Activated T-helper 1 cell treated with anti-CD3 and anti-CD28 coated beads, Interleukin-12 subunit alpha, Interleukin-12 subunit beta, Interleukin-2, Interleukin-4 antibody, amounts not matched to agents 30 ng/mL and 10 ng/mL and 1 ng/mL, durations not matched to agents 14 hours and 24 hours and 36 hours (primary cell): ENCODE measurements at regions of chr16 and their contacts with region 1.

Region 1: GRCh38 chr16:2251483-2252240 is at the start of gene ECI1:
- DNase-seq: peak; percentile 80
- H3K4me3 Mint-ChIP-seq: peak within 1 kb of the TSS; percentile 91
- H3K27ac Mint-ChIP-seq: peak within 1 kb of the TSS; percentile 94
- H3K4me1 Mint-ChIP-seq: peaks cover 10% of the 10 kb centered on the region
- H3K27me3 Mint-ChIP-seq: no peaks in the 10 kb centered on the region
- total RNA-seq, gene ECI1: 35.5 and 36.5 TPM in 2 replicates

Region 2: DNA sequence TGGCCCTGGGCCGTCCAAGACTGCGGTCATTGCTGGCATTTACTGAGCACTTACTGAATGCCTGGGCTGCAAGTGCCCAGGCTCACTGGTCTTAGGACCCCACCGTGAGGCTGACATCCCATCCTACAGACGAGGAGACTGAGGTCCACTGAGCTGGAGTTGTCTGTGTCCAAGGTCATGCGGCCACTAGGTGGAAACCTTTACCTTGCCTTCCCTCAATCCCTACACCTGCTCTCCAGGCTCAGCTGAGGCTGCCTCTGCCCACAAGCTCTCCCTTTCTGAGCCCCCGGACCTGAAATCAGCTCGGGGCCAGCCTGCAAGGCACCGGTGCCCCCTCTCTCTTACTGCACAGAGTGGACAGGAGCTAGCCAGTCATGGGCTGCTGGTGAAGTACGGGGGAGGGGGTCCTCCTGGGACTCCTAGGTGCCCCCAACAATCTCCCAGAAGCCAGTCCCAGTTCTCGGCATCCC is 56.8 kb before region 1 on chr16:
- intact Hi-C with region 1: loop called (anchors 2 kb)
- DNase-seq: peak; percentile 25
- H3K4me3 Mint-ChIP-seq: peak overlapping the region; percentile 15
- H3K27ac Mint-ChIP-seq: no peak overlapping the region
- H3K4me1 Mint-ChIP-seq: no peaks in the 10 kb centered on the region
- H3K27me3 Mint-ChIP-seq: peaks cover 32% of the 10 kb centered on the region

Region 3: GRCh38 chr16:2205104-2205966 is 46.3 kb before region 1 on chr16 and contains the start of gene MLST8:
- intact Hi-C with region 1: loop called (anchors 1 kb)
- DNase-seq: peak; percentile 90
- H3K4me3 Mint-ChIP-seq: peak within 1 kb of the TSS; percentile 86
- H3K27ac Mint-ChIP-seq: peak within 1 kb of the TSS; percentile 68
- H3K4me1 Mint-ChIP-seq: peaks cover 22% of the 10 kb centered on the region
- H3K27me3 Mint-ChIP-seq: peaks cover 13% of the 10 kb centered on the region
- total RNA-seq, gene MLST8: 57.0 and 61.9 TPM in 2 replicates

Region 4: DNA sequence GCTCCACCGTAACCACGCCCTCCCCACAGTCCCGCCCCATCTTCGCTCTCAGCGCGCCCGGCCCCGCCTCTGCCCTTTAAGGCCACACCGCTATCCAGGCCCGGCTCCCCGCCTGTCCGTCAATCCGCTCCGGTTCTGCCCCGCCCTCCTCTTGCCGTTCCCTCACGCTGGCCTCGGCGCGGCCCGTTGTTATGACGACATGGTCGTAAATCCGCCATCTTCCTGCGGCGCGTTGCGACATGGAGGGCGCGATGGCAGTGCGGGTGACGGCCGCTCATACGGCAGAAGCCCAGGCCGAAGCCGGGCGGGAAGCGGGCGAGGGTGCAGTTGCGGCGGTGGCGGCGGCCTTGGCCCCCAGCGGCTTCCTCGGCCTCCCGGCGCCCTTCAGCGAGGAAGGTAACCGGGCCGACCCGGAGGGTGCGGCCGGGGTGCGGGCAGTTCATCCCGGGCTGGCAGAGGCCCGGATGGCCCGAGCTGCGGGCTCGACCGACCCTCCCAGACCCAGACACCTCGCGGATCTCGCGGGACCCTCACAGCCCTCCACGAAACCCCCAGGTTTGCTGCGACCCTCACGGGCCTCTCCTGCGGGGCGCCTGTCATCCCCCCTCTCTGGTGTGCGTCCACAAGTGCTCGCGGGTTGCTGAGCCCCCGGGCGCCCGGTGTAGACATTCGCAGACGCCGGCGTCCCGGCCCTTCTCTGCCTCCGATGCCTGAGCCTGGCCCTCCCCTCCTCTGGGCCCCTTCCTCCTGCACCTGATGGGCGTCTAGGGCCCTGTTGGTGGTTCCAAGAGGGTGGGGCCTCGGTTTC is 28.1 kb before region 1 on chr16 and contains the start of gene E4F1:
- intact Hi-C with region 1: loop called (anchors 1 kb)
- DNase-seq: peak; percentile 99
- H3K4me3 Mint-ChIP-seq: peak within 1 kb of the TSS; percentile 87
- H3K27ac Mint-ChIP-seq: peak within 1 kb of the TSS; percentile 77
- H3K4me1 Mint-ChIP-seq: peaks cover 9% of the 10 kb centered on the region
- H3K27me3 Mint-ChIP-seq: no peaks in the 10 kb centered on the region
- total RNA-seq, gene E4F1: 35.6 and 37.4 TPM in 2 replicates

Region 5: DNA sequence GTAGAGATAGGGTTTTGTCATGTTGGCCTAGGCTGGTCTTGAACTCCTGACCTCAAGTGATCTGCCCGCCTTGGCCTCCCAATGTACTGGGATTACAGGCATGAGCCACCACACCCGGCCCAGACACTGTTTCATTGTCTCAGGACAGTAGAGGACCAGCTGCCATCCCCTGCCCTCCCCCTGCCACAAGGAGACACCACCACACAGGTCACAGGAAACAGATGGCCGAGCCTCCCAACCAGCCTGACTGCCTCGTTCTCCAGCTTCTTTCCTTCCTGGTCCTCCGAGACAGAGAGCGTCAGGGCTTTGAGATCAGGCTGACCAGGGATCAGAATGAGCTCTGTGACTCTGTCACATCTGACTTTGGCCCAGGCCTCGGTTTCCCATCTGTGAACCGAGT is 37.1 kb after region 1 on chr16:
- intact Hi-C with region 1: no loop called
- DNase-seq: no peak
- H3K4me3 Mint-ChIP-seq: no peak overlapping the region
- H3K27ac Mint-ChIP-seq: no peak overlapping the region
- H3K4me1 Mint-ChIP-seq: no peaks in the 10 kb centered on the region
- H3K27me3 Mint-ChIP-seq: no peaks in the 10 kb centered on the region

Region 6: DNA sequence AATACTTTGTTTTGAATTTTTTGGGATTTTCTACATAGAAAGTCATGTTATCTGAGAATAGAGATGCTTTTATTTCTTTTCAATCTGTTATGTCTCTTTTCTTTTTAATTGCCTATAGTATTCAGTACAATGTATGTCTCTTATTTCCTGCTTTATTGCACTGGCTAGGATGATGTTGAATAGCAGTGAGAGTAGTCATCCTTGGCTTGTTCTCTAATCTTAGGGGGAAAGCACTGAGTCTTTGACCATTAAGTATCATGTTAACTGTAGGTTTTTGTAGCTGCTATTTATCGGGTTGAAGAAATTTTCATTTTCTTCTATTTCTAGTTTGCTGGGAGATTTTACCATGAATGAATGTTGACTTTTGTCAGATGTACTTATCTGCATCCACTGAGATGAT is 98.8 kb after region 1 on chr16:
- intact Hi-C with region 1: no loop called
- DNase-seq: no peak
- H3K4me3 Mint-ChIP-seq: no peak overlapping the region
- H3K27ac Mint-ChIP-seq: no peak overlapping the region
- H3K4me1 Mint-ChIP-seq: no peaks in the 10 kb centered on the region
- H3K27me3 Mint-ChIP-seq: peaks cover 35% of the 10 kb centered on the region

Region 7: DNA sequence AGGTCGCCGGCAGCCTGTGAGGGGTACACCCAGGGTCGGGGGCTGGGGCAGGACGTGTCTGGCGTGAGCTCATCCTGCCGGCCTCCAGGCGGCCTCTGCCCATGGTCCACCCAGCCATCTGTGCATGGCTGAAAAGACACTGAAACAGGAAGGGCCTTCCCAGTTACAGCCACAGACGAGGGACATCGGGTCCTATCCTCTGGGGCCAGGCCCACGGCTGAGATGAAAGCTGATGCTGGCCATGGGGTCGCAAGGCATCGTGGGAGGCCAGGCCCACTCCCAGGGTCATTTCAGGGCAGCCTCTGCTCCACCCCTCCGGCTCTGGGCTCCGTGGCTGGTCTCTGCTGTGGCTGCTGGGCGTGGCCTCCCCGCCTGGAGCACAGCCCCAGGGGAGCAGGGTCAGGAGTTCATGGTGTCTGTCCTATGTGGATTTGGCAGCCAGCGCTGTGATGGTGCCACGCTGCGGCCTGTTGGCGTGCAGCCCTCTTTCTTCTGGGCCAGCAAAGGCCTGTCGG is 245.5 kb after region 1 on chr16:
- intact Hi-C with region 1: no loop called
- DNase-seq: no peak
- H3K4me3 Mint-ChIP-seq: no peak overlapping the region
- H3K27ac Mint-ChIP-seq: no peak overlapping the region
- H3K4me1 Mint-ChIP-seq: no peaks in the 10 kb centered on the region
- H3K27me3 Mint-ChIP-seq: no peaks in the 10 kb centered on the region